AG04450 (cell line): ENCODE measurements at regions of chr10 and their contacts with region 1.

Region 1: GRCh38 chr10:18523025-18523424 is 128.4 kb downstream of the NSUN6 start:
- DNase-seq: no peak
- H3K4me3 ChIP-seq: no peak overlapping the region
- H3K27ac ChIP-seq: no peak overlapping the region
- H3K27me3 ChIP-seq: no peaks in the 10 kb centered on the region
- CTCF ChIP-seq: no peak

Region 2: GRCh38 chr10:18607503-18608378 is 84.7 kb after region 1 on chr10:
- CTCF ChIA-PET with region 1: no interaction called
- POLR2A ChIA-PET with region 1: interaction called, 11 read pairs
- DNase-seq: peak; percentile 49
- H3K4me3 ChIP-seq: no peak overlapping the region
- H3K27ac ChIP-seq: no peak overlapping the region
- H3K27me3 ChIP-seq: no peaks in the 10 kb centered on the region
- CTCF ChIP-seq: no peak

Region 3: GRCh38 chr10:18647945-18648344 is 124.9 kb after region 1 on chr10:
- CTCF ChIA-PET with region 1: no interaction called
- POLR2A ChIA-PET with region 1: no interaction called
- DNase-seq: no peak
- H3K4me3 ChIP-seq: no peak overlapping the region
- H3K27ac ChIP-seq: no peak overlapping the region
- H3K27me3 ChIP-seq: no peaks in the 10 kb centered on the region
- CTCF ChIP-seq: no peak

Region 4: GRCh38 chr10:18659120-18659818 is 136.2 kb after region 1 on chr10 and contains the start of gene ARL5B:
- CTCF ChIA-PET with region 1: no interaction called
- POLR2A ChIA-PET with region 1: interaction called, 11 read pairs
- DNase-seq: peak; percentile 99
- H3K4me3 ChIP-seq: peak within 1 kb of the TSS; percentile 97
- H3K27ac ChIP-seq: peak within 1 kb of the TSS; percentile 99
- H3K27me3 ChIP-seq: no peaks in the 10 kb centered on the region
- CTCF ChIP-seq: no peak
- polyA plus RNA-seq, gene ARL5B: 15.1 and 24.2 TPM in 2 replicates